Heart left ventricle (tissue), 16 donors: ENCODE measurements at regions of chr15 and their contacts with region 1.

Region 1: GRCh38 chr15:40307421-40308211 is at the start of gene PLCB2:
- DNase-seq: peak; percentile 43 to 81 (median 52)
- ATAC-seq: peak; percentile 39 to 63 (median 57)
- H3K4me3 ChIP-seq: peak within 1 kb of the TSS in 10 of 12 donors; percentile 9 to 65 (median 33)
- H3K27ac ChIP-seq: peak within 1 kb of the TSS in 5 of 12 donors; percentile 54 to 95 (median 63)
- H3K4me1 ChIP-seq: peaks cover 0 to 25% (median 0%) of the 10 kb centered on the region in 12 donors
- H3K27me3 ChIP-seq: peaks cover 0 to 6% (median 0%) of the 10 kb centered on the region in 9 donors
- CTCF ChIP-seq: peak in 7 of 12 donors; percentile 4 to 38 (median 24)
- POLR2A ChIP-seq: no peak
- total RNA-seq, gene PLCB2: 1.6 to 46.2 (median 4.8) TPM

Region 2: DNA sequence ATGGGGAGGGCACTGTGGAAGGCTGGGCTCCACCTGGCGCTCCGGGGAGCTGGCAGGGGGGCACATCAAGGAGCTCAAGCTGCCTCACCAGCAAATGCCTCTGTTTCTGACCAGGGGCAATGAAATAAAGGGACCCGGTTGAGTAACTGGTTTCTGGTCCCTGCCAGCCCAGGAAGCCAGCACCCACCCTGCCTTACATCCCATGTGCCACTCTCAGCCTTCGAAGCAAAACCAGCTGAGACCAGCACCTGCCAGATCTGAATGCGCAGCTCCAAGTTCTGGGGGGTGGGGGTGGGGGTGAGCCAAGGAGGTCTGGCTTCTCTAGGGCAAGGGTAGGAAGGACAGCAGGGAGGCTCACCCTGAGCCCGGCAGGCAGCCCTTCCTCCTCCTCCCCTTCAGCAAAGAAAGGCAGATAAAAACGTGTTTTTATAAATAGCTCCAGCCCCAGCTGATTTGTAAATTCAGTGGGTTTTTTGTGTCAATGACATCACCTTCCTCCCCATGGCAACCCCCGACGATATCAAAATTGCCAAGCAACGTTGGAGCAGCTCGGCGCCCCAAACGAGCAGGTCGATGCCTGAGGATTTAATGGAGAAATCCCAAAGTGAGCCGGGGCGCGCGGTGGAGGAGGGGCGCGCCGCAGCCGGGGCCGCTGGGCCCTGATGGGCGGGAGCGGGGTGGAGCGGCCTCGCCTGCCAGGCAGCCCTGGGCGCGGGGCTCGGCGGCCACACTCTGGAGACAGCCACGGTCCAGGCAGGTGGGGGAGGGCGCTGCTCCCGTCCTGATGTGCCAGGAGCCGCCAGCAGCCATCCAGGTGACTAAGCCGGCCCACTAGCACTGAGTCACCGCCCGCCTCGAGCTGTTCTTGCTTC is 68.8 kb before region 1 on chr15 and contains the start of gene PAK6:
- intact Hi-C with region 1: loop called in 1 of 10 experiments (anchors 10 kb)
- DNase-seq: no peak
- ATAC-seq: peak; percentile 5 to 76 (median 55)
- H3K4me3 ChIP-seq: peak within 1 kb of the TSS in 11 of 12 donors; percentile 10 to 49 (median 40)
- H3K27ac ChIP-seq: no peak within 1 kb of the TSS
- H3K4me1 ChIP-seq: peaks cover 0 to 30% (median 3%) of the 10 kb centered on the region in 12 donors
- H3K27me3 ChIP-seq: peaks cover 0 to 19% (median 0%) of the 10 kb centered on the region in 9 donors
- CTCF ChIP-seq: no peak
- POLR2A ChIP-seq: no peak
- total RNA-seq, gene PAK6: 5.0 to 17.4 (median 8.0) TPM

Region 3: GRCh38 chr15:40357723-40358470 is 50.3 kb after region 1 on chr15 and contains the start of gene DISP2:
- intact Hi-C with region 1: loop called in 1 of 10 experiments (anchors 5 kb)
- DNase-seq: peak; percentile 87 to 96 (median 90)
- ATAC-seq: peak; percentile 81 to 95 (median 92)
- H3K4me3 ChIP-seq: peak within 1 kb of the TSS; percentile 35 to 65 (median 58)
- H3K27ac ChIP-seq: peak within 1 kb of the TSS in 4 of 12 donors; percentile 17 to 69 (median 36)
- H3K4me1 ChIP-seq: peaks cover 0 to 29% (median 10%) of the 10 kb centered on the region in 12 donors
- H3K27me3 ChIP-seq: no peaks in the 10 kb centered on the region
- CTCF ChIP-seq: peak in 2 of 12 donors; percentile 5 to 9
- POLR2A ChIP-seq: peak in 1 of 2 donors; percentile 19
- total RNA-seq, gene DISP2: 0.13 to 1.1 (median 0.40) TPM